ENCODE measurements at regions of chr13 and their contacts with region 1.

Region 1: GRCh38 chr13:97109841-97110492 is 112.2 kb upstream of the MBNL2 start:
- DNase-seq: peak; percentile 88
- H3K27ac ChIP-seq: no peak overlapping the region
- CTCF ChIP-seq: peak; percentile 96

Region 2: GRCh38 chr13:97212601-97213040 is 102.7 kb after region 1 on chr13:
- CTCF ChIA-PET with region 1: interaction called, 33 read pairs
- POLR2A ChIA-PET with region 1: no interaction called
- DNase-seq: peak; percentile 38
- H3K27ac ChIP-seq: no peak overlapping the region
- CTCF ChIP-seq: no peak

Region 3: GRCh38 chr13:97221989-97222700 is 112.2 kb after region 1 on chr13 and contains the start of gene MBNL2:
- CTCF ChIA-PET with region 1: interaction called, 19 read pairs
- POLR2A ChIA-PET with region 1: no interaction called
- DNase-seq: peak; percentile 92
- H3K27ac ChIP-seq: peak within 1 kb of the TSS; percentile 80
- CTCF ChIP-seq: no peak

Region 4: DNA sequence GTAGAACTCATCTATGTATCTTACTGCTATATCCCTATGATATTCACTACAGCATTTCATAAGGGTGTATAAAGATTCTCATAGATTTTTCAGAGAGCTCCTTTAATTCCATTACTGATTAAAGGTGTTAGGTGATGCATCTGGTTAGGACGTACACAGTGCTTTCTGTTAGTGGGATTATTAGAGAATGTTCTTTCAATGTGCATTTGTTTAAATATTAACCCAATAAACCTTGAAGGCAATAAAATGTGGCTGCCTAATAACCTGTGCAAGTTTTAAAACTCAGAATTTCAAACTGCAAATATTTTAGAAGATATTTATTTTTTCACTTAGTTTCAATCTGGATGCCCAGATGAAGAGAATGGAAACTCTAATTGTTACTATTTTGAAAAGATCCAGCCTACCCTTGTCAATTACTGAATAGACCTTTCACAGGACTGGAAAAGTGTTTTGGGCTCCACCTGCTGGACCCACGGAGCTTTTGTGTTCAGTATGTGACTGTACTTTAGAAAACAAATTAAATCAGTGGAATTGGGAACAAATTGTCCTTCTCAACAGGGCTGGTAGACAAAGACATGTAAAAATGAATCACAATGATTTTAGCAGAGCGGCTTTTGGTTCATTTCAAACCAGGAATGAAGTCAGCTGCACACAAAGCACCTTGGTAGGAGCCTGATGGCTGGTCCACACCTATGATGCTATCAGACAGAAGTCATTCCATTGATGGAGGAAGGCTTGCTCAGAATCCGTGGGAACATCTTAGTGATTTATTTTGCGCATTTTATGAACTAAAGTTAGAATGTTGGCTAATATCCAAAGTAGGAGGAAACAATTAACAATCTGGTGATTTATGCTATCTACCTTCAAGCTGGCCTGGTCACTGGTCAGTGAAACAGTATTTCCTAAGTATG is 234.6 kb after region 1 on chr13:
- CTCF ChIA-PET with region 1: interaction called, 12 read pairs
- POLR2A ChIA-PET with region 1: no interaction called
- DNase-seq: peak; percentile 50
- H3K27ac ChIP-seq: no peak overlapping the region
- CTCF ChIP-seq: peak; percentile 79

Region 5: GRCh38 chr13:97359181-97360057 is 249.5 kb after region 1 on chr13:
- CTCF ChIA-PET with region 1: interaction called, 19 read pairs
- POLR2A ChIA-PET with region 1: no interaction called
- DNase-seq: peak; percentile 51
- H3K27ac ChIP-seq: no peak overlapping the region
- CTCF ChIP-seq: peak; percentile 82

Region 6: DNA sequence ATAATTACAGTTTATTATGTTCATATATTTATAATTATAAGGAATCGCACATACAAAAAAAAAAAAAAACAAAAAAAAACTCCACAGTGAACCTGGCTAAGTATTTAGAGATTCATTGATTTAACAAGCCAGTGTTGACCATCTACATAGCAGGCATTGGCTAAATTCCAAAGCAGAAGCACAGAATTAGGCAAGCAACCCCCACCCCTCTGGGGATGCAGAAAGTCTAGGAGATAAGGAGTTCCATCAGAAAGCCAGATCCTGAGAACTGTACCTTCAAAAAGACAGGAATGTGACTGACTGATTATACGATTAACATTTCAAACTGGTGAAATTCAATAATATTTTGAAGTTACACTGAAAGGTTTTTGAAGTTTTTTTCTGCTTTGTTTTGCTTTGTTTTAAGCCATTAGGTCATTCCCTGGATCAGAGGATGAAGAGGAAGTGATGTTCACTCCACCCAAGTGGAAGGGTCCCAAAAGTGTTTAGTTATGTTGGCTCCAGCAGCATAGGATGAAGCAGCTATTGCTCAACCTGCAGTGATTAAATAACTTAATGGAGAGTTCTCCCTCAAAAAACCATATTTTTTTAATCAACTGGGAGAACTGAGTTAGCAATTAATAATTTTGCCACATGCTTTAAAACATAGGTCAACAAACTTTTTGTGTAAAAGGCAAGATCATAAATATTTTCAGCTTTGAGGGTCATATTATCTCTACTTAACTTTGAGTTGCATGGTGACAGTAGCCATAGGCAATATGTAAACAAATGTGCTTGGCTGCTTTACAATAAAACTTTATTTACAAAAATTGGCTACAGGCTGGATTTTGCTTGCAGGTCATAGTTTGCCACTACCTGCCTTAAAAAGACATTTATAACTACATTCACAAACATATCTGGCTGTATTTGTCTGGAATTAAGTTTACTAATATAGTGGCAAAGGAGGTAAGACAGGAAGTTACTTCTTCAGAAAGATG is 1818.3 kb after region 1 on chr13:
- CTCF ChIA-PET with region 1: no interaction called
- POLR2A ChIA-PET with region 1: no interaction called
- DNase-seq: no peak
- H3K27ac ChIP-seq: no peak overlapping the region
- CTCF ChIP-seq: no peak

Measured in RWPE1 (cell line).